Activated naive CD4-positive, alpha-beta T cell treated with anti-CD3 and anti-CD28 coated beads for 36 hours (primary cell): ENCODE measurements at regions of chr3 and their contacts with region 1.

Region 1: DNA sequence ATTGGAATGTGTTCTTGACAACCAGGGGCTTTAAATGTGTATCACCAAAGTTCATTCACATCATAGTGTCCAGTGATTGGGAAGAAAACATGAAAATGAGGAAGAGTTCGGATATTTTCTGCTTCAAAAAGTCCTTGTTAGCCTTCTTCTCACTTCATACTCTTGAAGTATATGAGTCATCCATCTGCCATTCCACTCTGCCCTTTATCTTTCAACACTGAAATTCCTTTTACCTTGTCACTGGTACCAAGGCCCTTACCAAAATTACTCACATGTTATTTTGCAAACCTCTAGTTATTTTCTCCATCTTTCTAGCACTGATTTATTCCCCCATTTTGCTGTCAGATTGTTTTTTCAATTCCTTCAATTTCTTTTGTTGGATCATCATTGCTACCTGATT is 32.5 kb downstream of the OR5H15 start:
- DNase-seq: no peak
- H3K4me3 Mint-ChIP-seq: no peak overlapping the region
- H3K27ac Mint-ChIP-seq: no peak overlapping the region
- H3K4me1 Mint-ChIP-seq: no peaks in the 10 kb centered on the region
- H3K27me3 Mint-ChIP-seq: peaks cover 2% of the 10 kb centered on the region

Region 2: DNA sequence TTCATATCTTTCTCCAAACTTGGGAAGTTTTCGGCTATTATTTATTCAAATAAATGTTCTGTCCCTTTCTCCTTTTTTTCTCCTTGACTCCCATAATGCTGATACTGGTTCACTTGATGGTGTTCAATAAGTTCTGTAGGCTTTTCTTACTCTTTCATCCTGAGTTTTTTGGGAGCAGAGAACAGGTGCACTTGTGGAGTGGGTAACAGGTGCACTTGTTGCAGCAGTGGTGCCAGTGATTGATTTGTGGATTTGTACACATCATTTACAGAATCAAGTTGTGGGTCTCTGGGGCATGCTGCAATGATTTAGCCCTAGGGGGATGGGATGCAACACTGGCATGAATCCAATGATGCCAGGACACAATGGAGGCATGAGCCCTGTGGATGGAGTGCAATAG is 83.3 kb before region 1 on chr3:
- CTCF ChIA-PET with region 1: no interaction called
- intact Hi-C with region 1: no loop called
- DNase-seq: no peak
- H3K4me3 Mint-ChIP-seq: no peak overlapping the region
- H3K27ac Mint-ChIP-seq: no peak overlapping the region
- H3K4me1 Mint-ChIP-seq: no peaks in the 10 kb centered on the region
- H3K27me3 Mint-ChIP-seq: peaks cover 10% of the 10 kb centered on the region

Region 3: DNA sequence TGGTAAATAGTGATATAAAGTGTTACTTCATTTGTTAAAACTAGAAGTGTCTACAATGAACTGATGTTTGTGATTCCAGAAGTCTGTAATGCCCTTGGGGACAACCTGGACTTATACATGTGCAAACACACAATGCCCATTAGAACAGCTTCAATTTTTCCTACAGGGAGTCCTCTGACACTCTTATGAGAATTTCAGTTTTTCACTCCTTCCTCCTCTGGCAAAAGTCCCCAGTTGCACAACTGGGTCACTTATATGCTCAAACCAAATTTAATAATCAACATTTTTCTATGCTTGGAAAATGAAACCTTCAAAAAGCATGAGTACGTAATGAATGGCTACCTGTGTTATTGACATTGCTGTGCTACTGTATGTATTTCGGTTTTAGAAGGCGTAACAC is 32.6 kb before region 1 on chr3 and contains the start of gene OR5H15:
- CTCF ChIA-PET with region 1: no interaction called
- intact Hi-C with region 1: loop called (anchors 1 kb)
- DNase-seq: no peak
- H3K4me3 Mint-ChIP-seq: no peak within 1 kb of the TSS
- H3K27ac Mint-ChIP-seq: no peak within 1 kb of the TSS
- H3K4me1 Mint-ChIP-seq: no peaks in the 10 kb centered on the region
- H3K27me3 Mint-ChIP-seq: no peaks in the 10 kb centered on the region
- total RNA-seq, gene OR5H15: not detected